CD8-positive, alpha-beta memory T cell (primary cell): ENCODE measurements at regions of chr7 and their contacts with region 1.

Region 1: DNA sequence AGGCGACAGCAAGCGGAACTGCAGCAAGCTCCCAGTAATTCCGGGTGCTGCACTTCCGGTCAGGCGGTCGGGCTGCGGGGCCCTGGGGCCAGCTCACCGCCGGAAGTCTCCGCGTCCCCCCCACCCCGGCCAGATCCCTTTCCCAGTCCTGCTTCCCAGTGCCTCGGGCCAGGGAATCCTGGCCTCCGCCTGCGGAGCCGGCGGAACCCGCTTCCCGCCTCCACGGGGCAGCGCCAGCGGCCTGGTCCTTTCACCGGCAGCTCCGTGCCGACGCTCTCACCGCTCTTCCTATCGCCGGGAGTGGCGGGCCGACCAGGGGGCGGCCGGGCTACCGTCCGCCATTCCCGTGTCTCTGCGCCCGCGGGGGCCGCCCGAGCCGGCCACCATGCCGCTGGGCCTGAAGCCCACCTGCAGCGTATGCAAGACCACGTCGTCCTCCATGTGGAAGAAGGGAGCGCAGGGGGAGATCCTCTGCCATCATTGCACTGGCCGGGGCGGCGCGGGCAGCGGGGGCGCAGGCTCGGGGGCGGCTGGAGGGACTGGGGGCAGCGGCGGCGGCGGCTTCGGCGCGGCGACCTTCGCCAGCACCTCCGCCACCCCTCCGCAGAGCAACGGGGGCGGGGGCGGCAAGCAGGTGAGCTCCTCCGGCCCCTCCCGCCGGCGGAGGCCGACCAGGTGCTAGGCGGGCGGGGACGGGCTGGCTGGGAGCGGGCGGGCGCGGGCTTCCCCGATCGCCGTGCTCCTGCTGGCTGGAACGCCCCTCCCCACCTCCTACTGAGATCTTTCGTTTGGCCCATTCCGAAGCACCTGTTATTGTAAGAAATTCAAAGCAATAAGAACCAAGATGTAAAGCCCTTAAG is at the start of gene GATAD1:
- DNase-seq: peak; percentile 68 to 88 (median 83)
- H3K4me3 ChIP-seq: peak within 1 kb of the TSS; percentile 91
- H3K4me3 Mint-ChIP-seq: peak within 1 kb of the TSS; percentile 91 to 99 (median 96)
- H3K27ac ChIP-seq: peak within 1 kb of the TSS; percentile 93
- H3K27ac Mint-ChIP-seq: peak within 1 kb of the TSS; percentile 96 to 99 (median 98)
- H3K4me1 ChIP-seq: peaks cover 14% of the 10 kb centered on the region
- H3K4me1 Mint-ChIP-seq: peaks cover 12 to 37% (median 20%) of the 10 kb centered on the region in 3 donors
- H3K27me3 ChIP-seq: no peaks in the 10 kb centered on the region
- H3K27me3 Mint-ChIP-seq: no peaks in the 10 kb centered on the region
- total RNA-seq, gene GATAD1: 18.3 to 18.9 TPM

Region 2: GRCh38 chr7:91940572-91941341 is 506.8 kb before region 1 on chr7 and contains the start of gene AKAP9:
- CTCF ChIA-PET with region 1: interaction called, 8 read pairs
- POLR2A ChIA-PET with region 1: interaction called, 10 read pairs
- DNase-seq: peak; percentile 82 to 92 (median 89)
- H3K4me3 ChIP-seq: peak within 1 kb of the TSS; percentile 93
- H3K4me3 Mint-ChIP-seq: peak within 1 kb of the TSS; percentile 91 to 100 (median 94)
- H3K27ac ChIP-seq: peak within 1 kb of the TSS; percentile 92
- H3K27ac Mint-ChIP-seq: peak within 1 kb of the TSS; percentile 86 to 99 (median 97)
- H3K4me1 ChIP-seq: peaks cover 26% of the 10 kb centered on the region
- H3K4me1 Mint-ChIP-seq: peaks cover 42 to 51% (median 50%) of the 10 kb centered on the region in 3 donors
- H3K27me3 ChIP-seq: no peaks in the 10 kb centered on the region
- H3K27me3 Mint-ChIP-seq: peaks cover 0 to 3% of the 10 kb centered on the region in 2 donors
- total RNA-seq, gene AKAP9: 34.9 to 40.3 TPM

Region 3: GRCh38 chr7:92245487-92246362 is 201.8 kb before region 1 on chr7 and contains the starts of genes ANKIB1 and KRIT1:
- CTCF ChIA-PET with region 1: interaction called, 15 read pairs
- POLR2A ChIA-PET with region 1: interaction called, 29 read pairs
- DNase-seq: peak; percentile 82 to 92 (median 86)
- H3K4me3 ChIP-seq: peak within 1 kb of the TSS; percentile 75
- H3K4me3 Mint-ChIP-seq: peak within 1 kb of the TSS; percentile 94 to 100 (median 98)
- H3K27ac ChIP-seq: peak within 1 kb of the TSS; percentile 86
- H3K27ac Mint-ChIP-seq: peak within 1 kb of the TSS; percentile 98 to 100 (median 100)
- H3K4me1 ChIP-seq: peaks cover 32% of the 10 kb centered on the region
- H3K4me1 Mint-ChIP-seq: peaks cover 52 to 59% (median 56%) of the 10 kb centered on the region in 3 donors
- H3K27me3 ChIP-seq: no peaks in the 10 kb centered on the region
- H3K27me3 Mint-ChIP-seq: no peaks in the 10 kb centered on the region
- total RNA-seq, gene ANKIB1: 42.7 to 44.7 TPM
- total RNA-seq, gene KRIT1: 44.6 to 48.3 TPM

Region 4: GRCh38 chr7:92366730-92367129 is 80.8 kb before region 1 on chr7:
- CTCF ChIA-PET with region 1: no interaction called
- POLR2A ChIA-PET with region 1: no interaction called
- DNase-seq: no peak
- H3K4me3 ChIP-seq: no peak overlapping the region
- H3K4me3 Mint-ChIP-seq: no peak overlapping the region
- H3K27ac ChIP-seq: no peak overlapping the region
- H3K27ac Mint-ChIP-seq: no peak overlapping the region
- H3K4me1 ChIP-seq: no peaks in the 10 kb centered on the region
- H3K4me1 Mint-ChIP-seq: no peaks in the 10 kb centered on the region
- H3K27me3 ChIP-seq: no peaks in the 10 kb centered on the region
- H3K27me3 Mint-ChIP-seq: no peaks in the 10 kb centered on the region

Region 5: GRCh38 chr7:92461027-92462003 is 13.7 kb after region 1 on chr7:
- CTCF ChIA-PET with region 1: interaction called, 19 read pairs
- POLR2A ChIA-PET with region 1: interaction called, 3 read pairs
- DNase-seq: peak in 1 of 5 donors; percentile 18
- H3K4me3 ChIP-seq: no peak overlapping the region
- H3K4me3 Mint-ChIP-seq: no peak overlapping the region
- H3K27ac ChIP-seq: no peak overlapping the region
- H3K27ac Mint-ChIP-seq: peak overlapping the region in 1 of 8 donors; percentile 50
- H3K4me1 ChIP-seq: no peaks in the 10 kb centered on the region
- H3K4me1 Mint-ChIP-seq: peaks cover 0 to 2% (median 0%) of the 10 kb centered on the region in 3 donors
- H3K27me3 ChIP-seq: no peaks in the 10 kb centered on the region
- H3K27me3 Mint-ChIP-seq: no peaks in the 10 kb centered on the region

Region 6: DNA sequence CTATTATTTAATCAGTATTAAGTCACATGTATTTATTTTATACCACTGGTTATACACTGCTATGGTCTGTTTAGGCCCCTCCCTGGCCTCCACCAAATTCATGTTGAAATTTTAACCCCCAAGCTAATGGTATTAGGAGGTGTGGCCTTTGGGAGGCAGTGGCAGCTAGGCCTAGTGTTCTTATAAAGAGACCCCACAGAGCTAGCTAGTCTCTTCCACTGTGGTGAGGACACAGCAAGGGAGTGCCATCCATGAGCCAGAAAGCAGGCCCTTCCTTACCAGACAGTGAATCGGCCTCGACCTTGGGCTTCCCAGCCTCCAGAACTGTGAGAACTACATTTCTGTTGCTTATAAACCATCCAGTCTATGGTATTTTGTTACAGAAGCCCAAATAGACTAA is 109.7 kb after region 1 on chr7:
- CTCF ChIA-PET with region 1: no interaction called
- POLR2A ChIA-PET with region 1: no interaction called
- DNase-seq: no peak
- H3K4me3 ChIP-seq: no peak overlapping the region
- H3K4me3 Mint-ChIP-seq: no peak overlapping the region
- H3K27ac ChIP-seq: no peak overlapping the region
- H3K27ac Mint-ChIP-seq: peak overlapping the region in 3 of 8 donors; percentile 9 to 65 (median 17)
- H3K4me1 ChIP-seq: no peaks in the 10 kb centered on the region
- H3K4me1 Mint-ChIP-seq: no peaks in the 10 kb centered on the region
- H3K27me3 ChIP-seq: no peaks in the 10 kb centered on the region
- H3K27me3 Mint-ChIP-seq: peaks cover 0 to 2% of the 10 kb centered on the region in 2 donors